ENCODE measurements at regions of chr6 and their contacts with region 1.

Region 1: GRCh38 chr6:24720604-24721460 is 1.9 kb upstream of the C6orf62 start:
- DNase-seq: peak; percentile 99
- ATAC-seq: peak; percentile 96
- H3K4me3 ChIP-seq: peak overlapping the region; percentile 99
- H3K27ac ChIP-seq: peak overlapping the region; percentile 89
- H3K4me1 ChIP-seq: peaks cover 23% of the 10 kb centered on the region
- H3K27me3 ChIP-seq: no peaks in the 10 kb centered on the region
- CTCF ChIP-seq: no peak

Region 2: DNA sequence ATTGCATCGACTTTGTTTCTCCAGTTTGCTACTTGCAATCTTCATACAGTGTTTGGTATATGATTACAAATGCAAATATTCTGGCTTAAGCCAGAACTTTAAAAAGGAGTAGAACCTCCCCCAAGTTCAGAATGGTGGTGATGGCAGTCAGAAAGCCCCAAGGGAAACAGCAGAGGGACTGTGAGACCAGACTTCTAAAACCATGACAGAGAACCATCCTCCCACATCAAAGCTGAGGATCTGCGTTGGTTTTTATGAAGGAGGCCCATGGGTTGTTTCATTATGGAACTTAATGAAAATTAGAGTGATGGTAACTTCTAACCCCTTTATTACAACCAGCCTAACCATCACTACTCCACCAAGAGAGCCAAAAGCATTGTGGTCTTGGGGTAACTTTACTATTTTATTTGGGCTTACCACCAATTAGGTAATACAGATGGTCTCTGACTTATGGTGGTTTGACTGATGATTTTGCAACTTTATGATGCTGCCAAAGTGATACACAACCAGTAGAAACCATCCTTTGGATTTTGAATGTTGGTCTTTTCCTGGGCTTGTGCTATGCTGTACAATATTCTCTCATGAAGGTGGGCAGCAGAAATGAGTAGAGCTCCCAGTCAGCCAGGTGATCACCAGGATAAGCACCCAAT is 329.0 kb before region 1 on chr6:
- CTCF ChIA-PET with region 1: interaction called, 10 read pairs
- POLR2A ChIA-PET with region 1: no interaction called
- intact Hi-C with region 1: no loop called
- DNase-seq: no peak
- ATAC-seq: no peak
- H3K4me3 ChIP-seq: no peak overlapping the region
- H3K27ac ChIP-seq: no peak overlapping the region
- H3K4me1 ChIP-seq: peaks cover 8% of the 10 kb centered on the region
- H3K27me3 ChIP-seq: no peaks in the 10 kb centered on the region
- CTCF ChIP-seq: no peak

Region 3: DNA sequence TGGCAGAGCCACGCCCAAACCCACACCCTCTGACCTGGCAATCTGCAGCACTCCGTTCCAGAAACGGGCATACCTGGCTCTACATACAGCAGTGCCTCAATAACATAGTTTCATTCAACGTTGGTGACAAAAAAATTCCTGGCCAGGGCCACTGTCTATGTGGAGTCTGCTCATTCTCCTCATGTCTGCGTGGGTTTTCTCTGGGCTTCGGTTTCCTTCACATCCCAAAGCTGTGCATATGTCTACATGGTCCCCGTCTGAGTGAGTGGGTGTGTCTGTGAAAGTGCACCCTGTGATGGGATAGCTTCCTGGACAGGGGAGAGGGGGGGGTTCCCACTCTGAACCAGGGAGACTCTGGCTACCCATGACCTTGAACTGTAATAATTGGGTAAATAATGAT is 76.9 kb before region 1 on chr6:
- CTCF ChIA-PET with region 1: no interaction called
- POLR2A ChIA-PET with region 1: no interaction called
- intact Hi-C with region 1: no loop called
- DNase-seq: no peak
- ATAC-seq: no peak
- H3K4me3 ChIP-seq: 0 out of 2 replicates have a peak overlapping the region, but pooled peaks have one; percentile 12
- H3K27ac ChIP-seq: no peak overlapping the region
- H3K4me1 ChIP-seq: peaks cover 24% of the 10 kb centered on the region
- H3K27me3 ChIP-seq: no peaks in the 10 kb centered on the region
- CTCF ChIP-seq: no peak

Region 4: DNA sequence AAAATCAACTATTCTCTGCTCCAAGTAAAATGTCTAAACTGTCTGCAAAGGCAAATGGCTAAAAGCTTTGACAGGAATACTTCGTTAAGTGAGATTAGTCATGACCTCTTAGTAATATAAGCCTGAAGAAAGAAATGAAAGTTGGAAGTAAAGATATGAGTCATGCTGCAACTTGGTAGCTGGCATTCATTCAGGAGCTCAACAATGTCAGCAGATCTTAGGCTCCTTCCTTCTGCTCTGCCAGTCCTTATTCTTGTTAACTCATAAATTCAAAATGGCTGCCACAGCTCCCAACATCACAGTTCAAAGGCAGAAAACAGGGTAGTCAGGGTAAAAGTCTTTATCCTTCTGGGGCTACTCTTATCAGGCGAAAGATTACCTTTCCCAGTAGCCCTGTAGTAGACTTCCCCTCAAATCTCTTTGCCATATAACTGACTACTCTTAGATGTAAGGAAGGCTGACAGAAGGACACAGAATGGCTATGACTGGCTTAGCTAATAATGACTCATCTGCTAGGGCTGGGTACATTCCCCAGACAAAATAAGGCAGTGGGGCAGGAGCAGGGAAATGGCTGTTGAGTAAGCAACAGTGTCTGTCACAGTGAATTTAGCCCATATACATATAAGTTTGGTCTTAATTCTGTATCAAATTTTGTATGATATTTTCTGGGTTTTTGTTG is 22.6 kb after region 1 on chr6:
- CTCF ChIA-PET with region 1: no interaction called
- POLR2A ChIA-PET with region 1: interaction called, 4 read pairs
- intact Hi-C with region 1: loop called (anchors 1 kb)
- DNase-seq: peak; percentile 93
- ATAC-seq: peak; percentile 98
- H3K4me3 ChIP-seq: peak overlapping the region; percentile 56
- H3K27ac ChIP-seq: peak overlapping the region; percentile 97
- H3K4me1 ChIP-seq: peaks cover 24% of the 10 kb centered on the region
- H3K27me3 ChIP-seq: no peaks in the 10 kb centered on the region
- CTCF ChIP-seq: no peak

Region 5: DNA sequence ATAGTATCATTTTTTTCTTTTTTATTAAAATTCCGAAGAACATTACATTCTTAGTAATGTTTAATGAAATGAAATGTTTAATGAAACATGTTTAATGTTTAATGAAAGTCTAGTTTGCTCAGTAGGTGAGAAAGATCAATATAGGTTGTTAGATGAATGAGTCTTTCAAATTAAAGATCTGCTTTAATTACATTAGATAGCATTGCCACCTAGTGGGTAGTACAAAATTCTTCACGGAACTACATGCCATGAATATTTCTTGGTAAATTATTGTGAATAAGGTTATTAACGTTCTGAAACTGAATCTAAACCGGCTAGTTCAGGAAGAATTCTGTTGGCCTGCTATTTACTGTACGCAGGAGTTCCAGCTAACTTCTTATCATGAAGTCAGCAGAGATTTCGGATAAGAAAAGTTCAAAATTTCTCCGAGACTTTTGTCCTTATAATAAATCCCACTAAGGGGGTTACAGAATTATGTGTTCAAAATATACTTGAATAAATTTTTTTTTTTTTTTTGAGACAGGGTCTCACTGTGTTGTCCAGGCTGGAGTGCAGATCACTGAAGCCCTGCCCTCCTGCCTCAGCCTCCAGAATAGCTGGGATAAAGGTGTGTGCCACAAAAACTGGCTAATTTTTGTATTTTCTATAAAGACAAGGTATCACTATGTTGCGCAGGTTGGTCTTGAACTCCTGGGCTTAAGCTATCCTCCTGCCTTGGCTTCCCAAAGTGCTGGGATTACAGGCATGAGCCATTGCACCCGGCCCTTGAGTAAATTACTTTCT is 46.0 kb after region 1 on chr6:
- CTCF ChIA-PET with region 1: no interaction called
- POLR2A ChIA-PET with region 1: no interaction called
- intact Hi-C with region 1: loop called (anchors 1 kb)
- DNase-seq: peak; percentile 62
- ATAC-seq: peak; percentile 75
- H3K4me3 ChIP-seq: no peak overlapping the region
- H3K27ac ChIP-seq: no peak overlapping the region
- H3K4me1 ChIP-seq: no peaks in the 10 kb centered on the region
- H3K27me3 ChIP-seq: no peaks in the 10 kb centered on the region
- CTCF ChIP-seq: peak; percentile 84

Region 6: DNA sequence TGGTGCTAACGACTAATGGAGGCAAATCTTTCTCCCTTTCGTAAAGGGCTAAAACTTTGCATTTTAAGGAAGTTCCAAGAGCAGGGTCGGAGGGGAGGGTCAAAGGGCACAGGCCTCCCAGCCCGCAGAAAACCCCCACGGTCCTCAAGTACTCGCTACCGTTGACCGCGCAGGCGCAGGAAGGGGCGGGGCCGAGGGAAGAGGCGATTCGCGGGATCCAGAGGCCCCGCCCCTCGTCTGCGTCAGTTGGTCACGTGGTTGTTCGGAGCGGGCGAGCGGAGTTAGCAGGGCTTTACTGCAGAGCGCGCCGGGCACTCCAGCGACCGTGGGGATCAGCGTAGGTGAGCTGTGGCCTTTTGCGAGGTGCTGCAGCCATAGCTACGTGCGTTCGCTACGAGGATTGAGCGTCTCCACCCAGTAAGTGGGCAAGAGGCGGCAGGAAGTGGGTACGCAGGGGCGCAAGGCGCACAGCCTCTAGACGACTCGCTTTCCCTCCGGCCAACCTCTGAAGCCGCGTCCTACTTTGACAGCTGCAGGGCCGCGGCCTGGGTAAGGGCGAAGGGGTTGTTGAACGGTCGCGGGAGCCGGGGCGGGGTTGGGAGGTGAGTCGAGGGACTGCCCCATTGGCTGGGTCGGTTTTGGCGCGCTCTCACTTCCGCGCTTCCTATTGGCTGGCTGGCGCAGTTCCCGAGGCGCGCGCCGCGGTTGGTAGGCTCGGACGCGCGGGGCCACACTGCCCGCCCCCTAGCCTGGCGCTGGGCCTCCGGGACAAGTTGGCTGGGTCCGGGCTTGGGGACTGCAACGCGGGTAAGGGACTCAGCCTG is 54.1 kb after region 1 on chr6 and contains the start of gene GMNN:
- CTCF ChIA-PET with region 1: no interaction called
- POLR2A ChIA-PET with region 1: no interaction called
- intact Hi-C with region 1: loop called (anchors 2 kb)
- DNase-seq: peak; percentile 95
- ATAC-seq: peak; percentile 91
- H3K4me3 ChIP-seq: peak within 1 kb of the TSS; percentile 97
- H3K27ac ChIP-seq: peak within 1 kb of the TSS; percentile 89
- H3K4me1 ChIP-seq: peaks cover 29% of the 10 kb centered on the region
- H3K27me3 ChIP-seq: no peaks in the 10 kb centered on the region
- CTCF ChIP-seq: no peak
- total RNA-seq, gene GMNN: 44.6 and 57.4 TPM in 2 replicates

Region 7: DNA sequence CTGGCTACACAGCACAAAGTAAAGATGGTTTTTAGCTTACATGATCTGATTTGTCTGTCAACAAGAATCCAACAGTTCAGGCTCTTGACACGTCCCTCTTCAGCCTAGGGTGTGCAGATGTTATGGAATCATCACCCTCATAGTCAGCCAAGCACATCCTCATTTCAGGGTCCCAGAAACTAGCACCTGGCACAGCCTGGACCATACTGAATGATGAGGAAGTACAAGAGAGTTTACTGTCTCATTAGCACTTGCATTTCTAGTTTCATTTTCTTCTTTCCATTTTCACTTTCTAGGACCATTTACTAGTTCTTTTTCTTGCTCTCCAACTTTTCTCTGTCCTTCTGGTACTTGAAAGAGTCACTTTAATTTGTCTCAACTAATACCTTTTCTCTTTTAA is 208.4 kb after region 1 on chr6:
- CTCF ChIA-PET with region 1: no interaction called
- POLR2A ChIA-PET with region 1: interaction called, 11 read pairs
- intact Hi-C with region 1: no loop called
- DNase-seq: no peak
- ATAC-seq: no peak
- H3K4me3 ChIP-seq: no peak overlapping the region
- H3K27ac ChIP-seq: no peak overlapping the region
- H3K4me1 ChIP-seq: peaks cover 47% of the 10 kb centered on the region
- H3K27me3 ChIP-seq: no peaks in the 10 kb centered on the region
- CTCF ChIP-seq: no peak

Region 8: GRCh38 chr6:25746968-25747367 is 1026.1 kb after region 1 on chr6:
- CTCF ChIA-PET with region 1: no interaction called
- POLR2A ChIA-PET with region 1: no interaction called
- intact Hi-C with region 1: no loop called
- DNase-seq: no peak
- ATAC-seq: no peak
- H3K4me3 ChIP-seq: no peak overlapping the region
- H3K27ac ChIP-seq: no peak overlapping the region
- H3K4me1 ChIP-seq: no peaks in the 10 kb centered on the region
- H3K27me3 ChIP-seq: peaks cover 14% of the 10 kb centered on the region
- CTCF ChIP-seq: peak; percentile 37; the same call in 1 of the 2 replicates